Activated CD4-positive, alpha-beta memory T cell treated with anti-CD3 and anti-CD28 coated beads, Interleukin-2, amount 10 ng/mL, durations not matched to agents 7 days and 5 days (primary cell): ENCODE measurements at regions of chr4 and their contacts with region 1.

Region 1: DNA sequence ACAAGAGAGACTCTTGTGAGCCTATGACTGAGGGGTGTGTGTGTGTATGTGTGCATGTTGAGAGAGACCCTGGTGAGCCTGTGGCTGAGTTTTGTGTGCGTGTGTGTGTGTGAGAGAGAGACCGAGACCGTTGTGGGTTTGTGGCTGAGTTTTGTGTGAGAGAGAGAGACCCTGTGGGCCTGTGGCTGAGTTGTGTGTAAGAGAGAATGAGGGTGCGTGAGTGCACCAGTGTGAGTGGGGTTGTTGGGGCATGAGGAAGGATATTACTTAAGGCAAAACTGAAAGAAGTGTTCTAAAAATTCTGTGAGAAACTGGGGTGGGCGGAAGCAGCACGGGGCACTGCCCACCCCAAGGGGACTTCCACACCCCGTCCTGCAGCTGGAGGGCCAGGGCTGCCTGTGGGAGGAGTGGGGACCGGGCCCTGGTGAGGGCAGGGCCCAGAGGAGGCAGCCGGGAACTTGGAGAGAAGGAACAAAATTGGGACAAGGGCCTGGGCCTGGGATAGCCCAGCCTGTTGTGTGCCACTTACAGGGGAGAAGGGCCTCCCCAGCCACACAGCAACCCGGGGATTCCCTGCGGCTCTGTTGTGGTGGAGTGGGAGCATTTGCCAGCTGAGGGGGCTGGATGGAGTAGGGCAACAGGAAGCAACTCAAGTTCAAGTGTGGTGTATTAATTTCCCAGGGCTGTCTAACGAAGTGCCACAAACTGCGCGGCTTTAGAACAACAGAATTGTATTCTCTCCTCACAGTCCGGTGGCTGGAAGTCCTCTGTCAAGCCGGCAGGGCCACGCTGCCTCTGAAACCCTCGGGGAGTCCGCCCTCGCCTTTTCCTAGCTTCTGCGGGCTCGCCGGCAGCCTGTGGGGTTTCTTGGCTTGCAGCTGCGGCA is 22.1 kb downstream of the TMEM131L start:
- DNase-seq: peak; percentile 65
- H3K4me3 Mint-ChIP-seq: peak overlapping the region; percentile 66
- H3K27ac Mint-ChIP-seq: peak overlapping the region; percentile 89
- H3K4me1 Mint-ChIP-seq: peaks cover 75% of the 10 kb centered on the region
- H3K27me3 Mint-ChIP-seq: no peaks in the 10 kb centered on the region

Region 2: DNA sequence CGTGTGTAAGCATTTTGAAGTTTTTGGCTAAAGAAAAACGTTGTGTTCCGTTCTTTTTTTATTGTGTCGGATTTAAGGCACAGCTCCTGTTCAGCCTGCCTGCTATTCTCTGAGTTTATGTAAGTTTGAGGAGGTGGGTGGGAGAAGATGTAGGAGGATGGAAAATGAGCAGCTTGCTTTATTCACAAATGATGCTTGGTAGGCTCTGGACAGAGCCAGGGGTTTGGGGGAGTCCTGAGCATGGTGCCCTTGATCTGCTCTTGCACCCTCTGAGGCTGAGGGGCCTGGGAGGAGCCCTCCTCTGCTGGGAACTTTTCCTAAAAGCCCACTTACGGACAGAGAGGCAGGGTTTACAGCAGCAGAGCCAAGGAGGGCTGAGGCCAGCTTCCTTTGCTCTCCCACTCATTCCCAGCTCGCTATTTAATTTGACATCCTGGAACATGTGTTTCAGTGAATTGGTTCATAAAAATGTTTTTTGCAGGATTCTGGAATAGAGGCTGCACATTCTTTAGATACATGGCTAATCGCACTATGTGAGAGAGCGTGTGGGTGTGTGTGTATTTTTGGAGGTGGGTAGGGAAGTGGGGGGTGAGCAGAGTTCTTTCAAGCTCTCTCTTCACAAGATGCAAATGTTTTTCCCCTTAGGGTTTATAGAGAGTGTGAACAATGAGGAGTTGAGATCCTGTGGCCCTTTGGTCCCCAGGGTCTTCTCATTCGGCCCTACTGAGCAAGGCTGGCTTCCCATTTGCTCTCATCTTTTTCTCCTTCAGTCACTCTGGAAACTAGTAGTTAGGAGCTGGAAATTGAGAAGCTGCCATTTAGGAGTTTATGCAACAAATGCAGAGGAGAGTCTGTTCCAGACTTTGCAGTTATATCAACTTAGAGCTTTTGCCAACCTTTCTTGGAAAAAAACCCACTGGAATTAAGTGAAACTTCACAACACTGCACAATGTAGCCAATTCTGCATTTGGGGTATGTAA is 10.0 kb after region 1 on chr4:
- CTCF ChIA-PET with region 1: interaction called, 6 read pairs
- POLR2A ChIA-PET with region 1: interaction called, 29 read pairs
- DNase-seq: no peak
- H3K4me3 Mint-ChIP-seq: peak overlapping the region; percentile 60
- H3K27ac Mint-ChIP-seq: peak overlapping the region; percentile 91
- H3K4me1 Mint-ChIP-seq: peaks cover 81% of the 10 kb centered on the region
- H3K27me3 Mint-ChIP-seq: no peaks in the 10 kb centered on the region

Region 3: GRCh38 chr4:153521999-153522801 is 34.0 kb after region 1 on chr4:
- CTCF ChIA-PET with region 1: interaction called, 4 read pairs
- POLR2A ChIA-PET with region 1: interaction called, 43 read pairs
- DNase-seq: peak; percentile 79
- H3K4me3 Mint-ChIP-seq: peak overlapping the region; percentile 54
- H3K27ac Mint-ChIP-seq: peak overlapping the region; percentile 91
- H3K4me1 Mint-ChIP-seq: peaks cover 88% of the 10 kb centered on the region
- H3K27me3 Mint-ChIP-seq: no peaks in the 10 kb centered on the region

Region 4: GRCh38 chr4:153528705-153529485 is 40.6 kb after region 1 on chr4:
- CTCF ChIA-PET with region 1: interaction called, 4 read pairs
- POLR2A ChIA-PET with region 1: interaction called, 43 read pairs
- DNase-seq: no peak
- H3K4me3 Mint-ChIP-seq: peak overlapping the region; percentile 54
- H3K27ac Mint-ChIP-seq: peak overlapping the region; percentile 81
- H3K4me1 Mint-ChIP-seq: peaks cover 78% of the 10 kb centered on the region
- H3K27me3 Mint-ChIP-seq: no peaks in the 10 kb centered on the region

Region 5: DNA sequence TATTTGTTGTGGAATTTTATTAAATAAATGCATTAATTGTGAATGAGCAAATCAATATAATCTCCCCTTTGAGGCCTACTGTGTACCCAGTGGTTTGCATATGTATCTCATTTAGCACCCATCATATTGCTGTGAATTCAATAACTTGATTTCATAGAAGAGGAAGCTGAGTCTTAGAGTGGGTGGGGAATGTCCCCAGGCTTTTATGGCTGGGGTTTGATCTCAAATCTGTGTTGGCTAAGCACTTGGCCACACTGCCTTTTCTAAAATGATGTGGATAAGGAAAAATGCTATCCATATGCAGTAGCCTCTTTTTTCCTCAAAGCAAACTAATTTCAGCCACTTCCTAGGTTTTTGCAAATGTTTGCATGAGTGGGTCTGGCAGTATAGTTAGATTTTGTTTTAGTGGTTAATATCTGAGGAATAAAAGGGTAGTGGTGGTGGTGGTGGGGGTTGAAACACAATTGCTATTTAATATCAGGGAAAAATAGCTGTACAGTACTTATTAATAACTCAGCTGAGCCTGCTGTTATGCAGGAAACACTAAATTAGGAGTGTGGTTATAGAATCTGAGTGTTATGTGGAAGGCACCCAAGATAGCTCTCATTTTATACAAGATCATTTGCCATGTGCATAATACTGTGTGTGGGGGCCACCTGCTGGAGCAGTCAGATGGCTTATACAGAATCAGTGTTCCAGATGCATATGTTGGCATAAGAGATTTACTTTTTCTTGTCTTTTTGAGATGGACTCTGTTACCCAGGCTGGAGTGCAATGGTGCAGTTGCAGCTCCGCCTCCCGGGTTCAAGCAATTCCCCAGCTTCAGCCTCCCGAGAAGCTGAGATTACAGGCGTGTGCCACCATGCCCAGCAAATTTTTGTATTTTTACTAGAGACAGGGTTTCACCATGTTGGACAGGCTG is 85.9 kb after region 1 on chr4:
- CTCF ChIA-PET with region 1: interaction called, 15 read pairs
- POLR2A ChIA-PET with region 1: interaction called, 7 read pairs
- DNase-seq: peak; percentile 77
- H3K4me3 Mint-ChIP-seq: no peak overlapping the region
- H3K27ac Mint-ChIP-seq: peak overlapping the region; percentile 9
- H3K4me1 Mint-ChIP-seq: peaks cover 31% of the 10 kb centered on the region
- H3K27me3 Mint-ChIP-seq: no peaks in the 10 kb centered on the region